Calu3 (cell line): ENCODE measurements at regions of chr19 and their contacts with region 1.

Region 1: DNA sequence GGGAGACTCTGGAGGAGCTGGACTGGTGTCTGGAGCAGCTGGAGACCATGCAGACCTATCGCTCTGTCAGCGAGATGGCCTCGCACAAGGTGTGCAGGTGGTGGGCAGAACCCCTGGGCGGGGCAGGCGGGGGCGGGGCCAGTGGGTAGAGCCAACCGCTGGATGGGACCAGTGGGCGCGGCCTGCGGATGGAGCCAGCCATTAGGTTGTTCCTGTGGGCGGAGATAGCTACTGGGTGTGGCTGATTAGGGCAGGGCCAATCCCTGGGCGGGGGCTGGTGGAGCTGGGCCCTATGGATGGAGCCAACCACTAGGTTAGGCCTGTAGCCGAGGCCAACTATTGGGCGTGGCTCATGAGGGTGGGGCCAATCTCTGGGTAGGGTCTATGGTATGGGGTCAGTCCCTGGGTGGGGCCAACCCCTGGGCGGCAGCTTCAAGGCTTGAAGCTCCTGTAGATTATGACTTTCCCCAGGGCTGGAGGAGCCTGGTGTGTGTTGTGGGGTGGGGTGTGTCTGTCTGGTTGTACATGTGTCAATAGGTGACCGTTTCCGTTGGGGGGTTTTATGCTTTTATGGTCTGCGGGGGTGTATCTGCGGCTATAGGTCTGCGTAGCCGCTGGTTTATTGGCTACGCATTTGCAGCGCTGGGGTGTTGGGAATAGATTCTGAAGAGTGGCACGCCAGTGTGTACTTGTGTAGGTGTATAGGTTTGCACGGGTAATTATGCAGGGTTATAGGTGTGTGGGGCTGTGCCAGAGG is 30.7 kb downstream of the PDE4A start:
- DNase-seq: no peak
- H3K4me3 Mint-ChIP-seq: no peak overlapping the region
- H3K27ac Mint-ChIP-seq: no peak overlapping the region
- H3K4me1 Mint-ChIP-seq: no peaks in the 10 kb centered on the region
- H3K27me3 Mint-ChIP-seq: no peaks in the 10 kb centered on the region
- CTCF ChIP-seq: no peak

Region 2: GRCh38 chr19:10502524-10503001 is 51.5 kb after region 1 on chr19:
- CTCF ChIA-PET with region 1: interaction called, 10 read pairs
- intact Hi-C with region 1: no loop called
- DNase-seq: peak; percentile 90
- H3K4me3 Mint-ChIP-seq: peak overlapping the region; percentile 85
- H3K27ac Mint-ChIP-seq: peak overlapping the region; percentile 82
- H3K4me1 Mint-ChIP-seq: peaks cover 13% of the 10 kb centered on the region
- H3K27me3 Mint-ChIP-seq: no peaks in the 10 kb centered on the region
- CTCF ChIP-seq: no peak

Region 3: GRCh38 chr19:10587022-10587789 is 136.2 kb after region 1 on chr19 and contains the start of gene AP1M2:
- CTCF ChIA-PET with region 1: no interaction called
- intact Hi-C with region 1: no loop called
- DNase-seq: peak; percentile 56
- H3K4me3 Mint-ChIP-seq: peak within 1 kb of the TSS; percentile 73
- H3K27ac Mint-ChIP-seq: peak within 1 kb of the TSS; percentile 73
- H3K4me1 Mint-ChIP-seq: peaks cover 12% of the 10 kb centered on the region
- H3K27me3 Mint-ChIP-seq: no peaks in the 10 kb centered on the region
- CTCF ChIP-seq: no peak
- total RNA-seq, gene AP1M2: 73.7 and 77.9 TPM in 2 replicates